ENCODE measurements at regions of chr21 and their contacts with region 1.

Region 1: GRCh38 chr21:31088315-31088714 is 50.0 kb upstream of the KRTAP19-8 start:
- DNase-seq: no peak
- ATAC-seq: no peak
- H3K4me3 ChIP-seq: no peak overlapping the region
- H3K27ac ChIP-seq: no peak overlapping the region
- H3K4me1 ChIP-seq: no peaks in the 10 kb centered on the region
- H3K27me3 ChIP-seq: peaks cover 15% of the 10 kb centered on the region; the same call in 1 of the 2 replicates
- CTCF ChIP-seq: no peak

Region 2: GRCh38 chr21:29080454-29080941 is 2007.8 kb before region 1 on chr21:
- CTCF ChIA-PET with region 1: no interaction called
- POLR2A ChIA-PET with region 1: no interaction called
- intact Hi-C with region 1: loop called (anchors 10 kb)
- DNase-seq: no peak
- ATAC-seq: no peak
- H3K4me3 ChIP-seq: no peak overlapping the region
- H3K27ac ChIP-seq: no peak overlapping the region
- H3K4me1 ChIP-seq: peaks cover 24% of the 10 kb centered on the region
- H3K27me3 ChIP-seq: no peaks in the 10 kb centered on the region
- CTCF ChIP-seq: no peak

Region 3: DNA sequence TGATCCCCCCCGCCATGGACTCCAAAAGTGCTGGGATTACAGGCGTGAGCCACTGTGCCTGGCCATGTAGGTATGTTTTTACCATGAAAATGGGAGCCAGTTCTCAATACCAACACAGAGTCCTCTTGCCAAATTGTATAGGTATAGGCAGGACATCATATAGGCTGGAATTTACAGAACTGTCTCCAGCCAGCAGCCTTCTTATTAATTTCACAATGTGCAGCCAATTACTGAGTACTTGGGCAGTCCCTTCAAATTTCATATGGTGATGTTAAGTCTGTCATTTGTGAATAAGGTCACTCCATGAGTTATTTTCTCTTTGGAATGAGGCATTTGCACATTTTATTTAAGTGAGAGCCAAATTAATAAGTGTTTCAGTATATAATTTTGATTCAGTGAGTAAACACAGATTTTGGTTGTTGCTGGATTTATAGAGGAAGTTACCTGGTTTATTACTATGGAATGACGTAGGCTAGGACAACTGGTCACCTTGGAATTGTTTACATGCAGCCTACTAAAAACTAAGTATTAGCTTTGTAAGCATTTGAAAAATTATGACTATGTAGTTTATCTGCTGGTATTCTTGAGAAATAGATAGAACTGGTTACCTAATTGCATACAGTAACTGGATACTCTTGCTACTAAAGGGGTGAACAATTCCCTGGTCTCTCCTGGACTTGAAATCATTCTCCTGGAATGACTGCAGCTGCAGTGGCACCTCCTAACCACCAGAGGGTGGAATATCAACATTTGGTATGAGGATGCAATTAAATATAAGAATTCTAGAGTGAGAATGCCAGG is 747.7 kb before region 1 on chr21:
- CTCF ChIA-PET with region 1: no interaction called
- POLR2A ChIA-PET with region 1: no interaction called
- intact Hi-C with region 1: loop called (anchors 1 kb)
- DNase-seq: peak; percentile 83
- ATAC-seq: peak; percentile 82
- H3K4me3 ChIP-seq: no peak overlapping the region
- H3K27ac ChIP-seq: peak overlapping the region; percentile 78
- H3K4me1 ChIP-seq: peaks cover 19% of the 10 kb centered on the region
- H3K27me3 ChIP-seq: peaks cover 10% of the 10 kb centered on the region; the same call in 1 of the 2 replicates
- CTCF ChIP-seq: peak; percentile 96

Region 4: DNA sequence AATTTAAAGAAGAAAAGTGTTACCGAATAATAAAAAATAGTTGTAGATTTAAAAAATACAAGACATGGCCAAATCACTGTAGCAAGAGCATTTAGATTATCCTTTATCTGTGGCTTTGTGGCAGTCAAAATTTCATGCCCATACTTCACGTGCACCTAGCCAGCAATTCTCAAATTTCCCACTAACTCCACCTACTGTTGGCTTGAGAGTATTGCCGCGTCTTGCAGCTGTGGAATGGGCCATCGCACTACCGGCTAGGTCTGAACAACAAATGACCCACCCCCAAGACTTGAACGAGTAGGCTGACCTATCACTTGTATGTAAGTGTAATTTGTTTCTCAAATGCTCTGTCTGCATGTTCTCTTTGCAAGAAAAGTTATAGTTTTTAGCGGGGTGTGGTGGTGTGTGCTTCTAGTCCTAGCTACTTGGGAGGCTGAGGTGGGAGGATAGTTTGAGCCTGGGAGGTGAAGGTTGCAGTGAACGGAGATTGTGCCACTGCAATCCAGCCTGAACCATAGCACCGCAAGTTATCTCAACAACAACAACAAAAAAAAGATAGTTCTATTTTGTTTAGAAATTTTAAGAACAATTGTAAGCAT is 654.2 kb before region 1 on chr21:
- CTCF ChIA-PET with region 1: no interaction called
- POLR2A ChIA-PET with region 1: no interaction called
- intact Hi-C with region 1: loop called (anchors 10 kb)
- DNase-seq: peak; percentile 78
- ATAC-seq: peak; percentile 85
- H3K4me3 ChIP-seq: no peak overlapping the region
- H3K27ac ChIP-seq: no peak overlapping the region
- H3K4me1 ChIP-seq: peaks cover 5% of the 10 kb centered on the region; the same call in 1 of the 2 replicates
- H3K27me3 ChIP-seq: peaks cover 52% of the 10 kb centered on the region
- CTCF ChIP-seq: peak; percentile 75

Region 5: DNA sequence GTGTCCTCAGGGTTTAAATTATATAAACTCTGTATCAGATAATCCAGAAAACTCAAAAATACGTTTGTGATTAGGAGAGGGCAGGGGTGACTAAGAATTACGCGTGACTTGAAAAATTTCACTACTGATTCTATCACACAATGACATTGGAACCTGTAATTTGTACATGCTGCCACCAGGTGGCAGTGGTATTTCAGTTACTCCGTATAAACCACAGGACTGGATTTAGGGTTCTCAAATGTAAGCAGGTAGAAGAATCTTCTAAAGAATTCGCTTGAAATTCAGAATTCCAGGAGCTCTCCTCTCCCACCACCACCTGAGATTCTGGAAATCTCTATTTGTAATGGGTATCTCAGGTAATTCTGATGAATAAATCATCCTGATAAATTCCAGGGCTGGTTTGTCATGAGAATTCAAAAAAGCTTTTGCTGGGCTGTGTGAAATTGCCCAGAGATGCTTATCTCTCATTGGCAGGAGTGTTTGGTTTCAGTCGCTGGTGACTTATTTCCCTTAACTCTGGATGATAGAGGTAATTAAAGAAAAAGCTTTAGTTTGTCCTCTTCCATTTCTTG is 257.0 kb before region 1 on chr21:
- CTCF ChIA-PET with region 1: no interaction called
- POLR2A ChIA-PET with region 1: no interaction called
- intact Hi-C with region 1: loop called (anchors 1 kb)
- DNase-seq: peak; percentile 76
- ATAC-seq: peak; percentile 48
- H3K4me3 ChIP-seq: no peak overlapping the region
- H3K27ac ChIP-seq: no peak overlapping the region
- H3K4me1 ChIP-seq: no peaks in the 10 kb centered on the region
- H3K27me3 ChIP-seq: peaks cover 41% of the 10 kb centered on the region
- CTCF ChIP-seq: peak; percentile 83

Region 6: DNA sequence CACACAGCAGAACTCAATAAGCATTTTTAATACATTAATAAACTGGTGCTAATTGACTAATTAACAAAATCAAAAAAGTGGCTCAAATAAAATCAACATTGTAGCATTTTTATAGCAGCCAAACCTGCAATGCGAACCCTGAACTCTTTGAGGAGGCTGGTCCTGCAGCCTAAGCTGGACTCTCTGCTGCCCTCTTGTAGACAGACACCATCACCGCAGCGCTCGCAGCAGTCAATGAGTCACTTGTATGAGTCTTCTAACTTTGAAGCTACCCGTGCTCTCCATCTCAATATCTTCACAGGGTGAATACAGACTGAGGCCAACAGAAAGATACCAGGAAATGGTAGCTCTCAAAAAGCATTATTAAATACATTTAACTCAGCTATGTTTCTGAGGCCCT is 249.0 kb before region 1 on chr21:
- CTCF ChIA-PET with region 1: interaction called, 5 read pairs
- POLR2A ChIA-PET with region 1: no interaction called
- intact Hi-C with region 1: loop called (anchors 2 kb)
- DNase-seq: peak; percentile 75
- ATAC-seq: peak; percentile 97
- H3K4me3 ChIP-seq: no peak overlapping the region
- H3K27ac ChIP-seq: no peak overlapping the region
- H3K4me1 ChIP-seq: no peaks in the 10 kb centered on the region
- H3K27me3 ChIP-seq: peaks cover 36% of the 10 kb centered on the region
- CTCF ChIP-seq: peak; percentile 83

Measured in PC-3 (cell line).